Calu3 (cell line): ENCODE measurements at regions of chr1 and their contacts with region 1.

Region 1: DNA sequence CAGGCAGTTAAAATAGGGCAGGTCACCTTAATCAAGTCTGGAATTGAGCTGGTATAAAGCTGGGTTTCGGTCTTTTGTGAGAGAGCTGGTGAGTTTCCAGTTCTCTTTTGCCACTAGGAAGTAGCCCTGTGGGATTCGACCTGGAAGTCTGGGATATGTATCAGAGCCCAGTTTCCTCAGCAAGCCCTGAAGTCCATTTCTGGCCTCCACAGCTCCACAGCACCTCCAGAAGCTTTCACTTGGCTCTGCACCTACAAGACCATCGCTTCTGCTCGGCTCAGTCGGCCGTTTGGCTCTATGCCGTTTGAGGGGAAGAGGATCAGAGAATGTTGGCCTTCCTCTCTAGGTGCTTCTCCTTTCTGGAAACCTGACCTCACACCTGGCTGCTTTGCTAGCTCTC is 148.0 kb downstream of the GALNT2 start:
- DNase-seq: peak; percentile 35
- H3K4me3 Mint-ChIP-seq: no peak overlapping the region
- H3K27ac Mint-ChIP-seq: peak overlapping the region; percentile 4
- H3K4me1 Mint-ChIP-seq: peaks cover 55% of the 10 kb centered on the region
- H3K27me3 Mint-ChIP-seq: no peaks in the 10 kb centered on the region
- CTCF ChIP-seq: no peak

Region 2: DNA sequence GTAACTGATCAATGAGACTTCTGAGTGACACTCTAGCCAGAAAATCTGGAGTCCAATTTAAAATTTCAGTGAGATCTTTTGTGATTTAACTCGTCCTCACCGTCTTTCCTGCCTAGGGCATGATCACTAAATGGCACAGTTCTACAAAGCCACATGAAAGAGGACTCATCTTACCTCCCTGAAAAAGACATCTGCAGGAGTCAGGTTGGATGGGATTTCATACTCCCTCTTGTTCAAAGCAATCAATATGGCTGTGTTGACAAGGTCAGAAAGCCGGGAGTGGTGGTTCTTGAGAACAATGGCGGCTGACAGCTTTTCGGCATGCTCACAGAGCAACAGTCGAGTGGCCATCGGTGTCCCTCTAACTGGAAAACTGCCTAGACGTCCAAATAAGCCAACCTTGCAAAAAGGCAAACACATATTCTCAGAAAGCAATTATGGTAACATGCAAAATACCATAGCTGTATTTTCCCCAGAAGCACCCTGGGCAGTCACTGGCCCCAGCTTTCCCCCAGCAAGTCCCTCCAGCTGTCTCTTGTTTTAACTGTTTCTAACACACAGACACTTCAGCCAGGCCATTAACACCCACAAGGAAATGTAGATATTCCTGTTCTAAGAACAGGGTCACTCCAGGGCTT is 744.5 kb before region 1 on chr1:
- CTCF ChIA-PET with region 1: no interaction called
- intact Hi-C with region 1: no loop called
- DNase-seq: no peak
- H3K4me3 Mint-ChIP-seq: no peak overlapping the region
- H3K27ac Mint-ChIP-seq: no peak overlapping the region
- H3K4me1 Mint-ChIP-seq: no peaks in the 10 kb centered on the region
- H3K27me3 Mint-ChIP-seq: no peaks in the 10 kb centered on the region
- CTCF ChIP-seq: no peak

Region 3: DNA sequence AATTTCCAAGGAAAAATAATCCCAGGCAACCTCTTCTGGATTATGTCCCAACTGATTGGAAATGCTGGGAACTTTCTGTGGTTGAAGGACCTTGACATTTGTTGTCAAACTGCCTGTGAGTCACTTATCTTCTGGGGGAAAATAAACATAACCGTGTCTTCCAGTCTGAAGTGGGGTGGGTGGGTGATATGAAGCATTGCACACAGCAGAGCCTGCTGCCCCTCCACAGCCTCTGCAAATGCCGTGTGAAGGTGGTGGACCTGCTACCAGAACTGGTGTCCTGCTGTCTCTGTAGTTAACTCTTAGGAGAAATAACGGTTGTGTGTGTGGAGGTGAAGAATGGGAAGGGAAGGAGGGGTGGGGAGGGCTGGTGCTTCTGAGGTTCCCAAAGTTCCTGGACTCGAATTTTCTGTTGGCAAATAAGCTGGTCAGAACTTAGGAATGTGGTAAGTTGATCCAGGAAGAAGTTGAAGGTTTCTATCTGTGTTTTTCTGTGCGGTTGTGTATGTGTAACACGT is 124.8 kb before region 1 on chr1:
- CTCF ChIA-PET with region 1: no interaction called
- intact Hi-C with region 1: loop called (anchors 2 kb)
- DNase-seq: no peak
- H3K4me3 Mint-ChIP-seq: peak overlapping the region; percentile 1
- H3K27ac Mint-ChIP-seq: peak overlapping the region; percentile 7
- H3K4me1 Mint-ChIP-seq: peaks cover 79% of the 10 kb centered on the region
- H3K27me3 Mint-ChIP-seq: no peaks in the 10 kb centered on the region
- CTCF ChIP-seq: no peak

Region 4: GRCh38 chr1:230426246-230427093 is 211.4 kb after region 1 on chr1 and contains the start of gene PGBD5:
- CTCF ChIA-PET with region 1: no interaction called
- intact Hi-C with region 1: no loop called
- DNase-seq: peak; percentile 93
- H3K4me3 Mint-ChIP-seq: peak within 1 kb of the TSS; percentile 96
- H3K27ac Mint-ChIP-seq: peak within 1 kb of the TSS; percentile 74
- H3K4me1 Mint-ChIP-seq: peaks cover 42% of the 10 kb centered on the region
- H3K27me3 Mint-ChIP-seq: no peaks in the 10 kb centered on the region
- CTCF ChIP-seq: no peak
- total RNA-seq, gene PGBD5: 27.4 and 37.8 TPM in 2 replicates